IMR-90 (cell line): ENCODE measurements at regions of chr2 and their contacts with region 1.

Region 1: DNA sequence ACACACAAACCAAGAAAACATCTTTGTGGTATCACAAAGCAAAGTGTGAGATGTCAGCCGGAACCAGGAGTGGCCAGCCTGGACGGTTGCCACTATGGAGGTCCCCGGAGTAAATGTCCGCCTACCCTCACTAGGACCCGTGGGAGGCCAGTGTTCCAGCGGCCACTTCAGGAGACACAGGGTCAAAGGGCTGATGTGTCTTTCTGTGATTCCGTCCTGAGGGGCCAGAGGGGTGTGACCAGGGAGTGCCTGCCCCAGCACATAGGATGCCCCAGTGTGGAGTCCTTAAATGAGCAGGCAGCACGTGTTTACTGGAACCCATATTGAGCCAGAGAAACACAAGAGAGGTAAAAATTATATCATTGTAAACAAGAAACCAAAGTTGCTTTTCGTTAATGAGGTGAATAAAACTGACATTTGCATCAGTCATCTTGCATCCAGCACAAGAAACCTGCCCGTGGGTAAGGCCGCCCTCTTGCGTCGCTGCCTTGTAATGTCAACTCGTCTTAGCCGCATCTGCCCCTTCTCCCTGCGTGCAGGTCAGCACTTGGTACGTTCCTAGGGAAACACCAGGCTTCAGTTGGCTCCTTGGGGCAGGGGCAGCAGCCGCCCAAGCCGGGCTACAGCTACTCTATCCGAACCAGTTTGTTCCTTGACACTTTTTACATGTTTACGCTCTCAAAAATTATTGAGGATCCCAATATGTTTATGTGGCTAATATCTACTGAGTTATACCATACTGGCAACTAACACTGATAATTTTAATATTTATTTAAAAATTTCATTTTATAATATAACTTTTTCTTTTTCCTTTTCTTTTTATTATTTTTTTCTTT is 46.7 kb upstream of the LAPTM4A start:
- DNase-seq: peak; percentile 85
- ATAC-seq: peak; percentile 85
- H3K4me3 ChIP-seq: no peak overlapping the region
- H3K27ac ChIP-seq: no peak overlapping the region
- H3K4me1 ChIP-seq: peaks cover 18% of the 10 kb centered on the region
- H3K27me3 ChIP-seq: no peaks in the 10 kb centered on the region
- CTCF ChIP-seq: peak; percentile 96
- POLR2A ChIP-seq: peak; percentile 52; the same call in 1 of the 2 replicates
- RAD21 ChIP-seq: peak; percentile 99

Region 2: GRCh38 chr2:19963386-19963785 is 134.7 kb before region 1 on chr2:
- CTCF ChIA-PET with region 1: no interaction called
- POLR2A ChIA-PET with region 1: no interaction called
- dilution Hi-C with region 1: no loop called
- in situ Hi-C with region 1: loop called (anchors 5 kb)
- intact Hi-C with region 1: no loop called
- DNase-seq: no peak
- ATAC-seq: no peak
- H3K4me3 ChIP-seq: no peak overlapping the region
- H3K27ac ChIP-seq: no peak overlapping the region
- H3K4me1 ChIP-seq: no peaks in the 10 kb centered on the region
- H3K27me3 ChIP-seq: no peaks in the 10 kb centered on the region
- CTCF ChIP-seq: no peak
- POLR2A ChIP-seq: no peak
- RAD21 ChIP-seq: no peak

Region 3: DNA sequence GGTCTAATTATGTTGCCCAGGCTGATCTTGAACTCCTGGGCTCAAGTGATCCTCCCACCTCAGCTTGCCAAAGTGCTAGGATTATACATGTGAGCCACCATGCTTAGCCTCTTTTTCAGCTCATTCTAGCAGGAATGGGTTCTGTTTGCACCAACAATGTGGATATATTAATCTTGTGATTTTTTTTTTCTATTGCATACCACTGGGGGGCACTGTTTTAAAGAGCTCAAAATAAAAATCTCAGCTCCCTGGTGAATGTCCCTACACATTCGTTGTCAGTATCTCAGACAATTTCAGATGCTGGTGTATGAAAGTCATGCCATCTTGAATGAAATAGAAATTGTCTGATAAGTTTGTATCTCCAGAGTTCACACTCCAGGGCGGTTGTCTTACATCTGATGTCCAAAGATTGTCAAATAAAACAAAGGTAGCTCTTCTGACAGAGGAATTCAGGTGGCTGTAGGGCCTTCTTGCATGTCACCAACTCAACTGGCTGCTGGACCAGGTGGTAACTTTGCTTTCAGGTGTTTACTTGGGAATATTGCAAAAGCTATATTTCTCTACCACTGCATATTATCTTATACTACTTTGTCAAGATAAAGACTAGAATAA is 82.5 kb before region 1 on chr2:
- CTCF ChIA-PET with region 1: interaction called, 26 read pairs
- POLR2A ChIA-PET with region 1: no interaction called
- dilution Hi-C with region 1: no loop called
- in situ Hi-C with region 1: no loop called
- intact Hi-C with region 1: loop called (anchors 1 kb)
- DNase-seq: peak; percentile 65
- ATAC-seq: peak; percentile 27; the same call in 1 of the 2 replicates
- H3K4me3 ChIP-seq: no peak overlapping the region
- H3K27ac ChIP-seq: no peak overlapping the region
- H3K4me1 ChIP-seq: peaks cover 3% of the 10 kb centered on the region
- H3K27me3 ChIP-seq: peaks cover 13% of the 10 kb centered on the region
- CTCF ChIP-seq: peak; percentile 74
- POLR2A ChIP-seq: no peak
- RAD21 ChIP-seq: peak; percentile 68

Region 4: GRCh38 chr2:20033341-20033740 is 64.8 kb before region 1 on chr2:
- CTCF ChIA-PET with region 1: no interaction called
- POLR2A ChIA-PET with region 1: no interaction called
- dilution Hi-C with region 1: no loop called
- in situ Hi-C with region 1: no loop called
- intact Hi-C with region 1: loop called (anchors 5 kb)
- DNase-seq: no peak
- ATAC-seq: no peak
- H3K4me3 ChIP-seq: no peak overlapping the region
- H3K27ac ChIP-seq: no peak overlapping the region
- H3K4me1 ChIP-seq: 0 out of 2 replicates have a peak, but pooled peaks cover 1% of the 10 kb centered on the region
- H3K27me3 ChIP-seq: no peaks in the 10 kb centered on the region
- CTCF ChIP-seq: no peak
- POLR2A ChIP-seq: no peak
- RAD21 ChIP-seq: no peak